Heart left ventricle (tissue), 16 donors: ENCODE measurements at regions of chr10 and their contacts with region 1.

Region 1: GRCh38 chr10:4849555-4850242 is 23.7 kb downstream of the AKR1E2 start:
- DNase-seq: peak; percentile 86 to 93 (median 89)
- ATAC-seq: peak; percentile 77 to 90 (median 88)
- H3K4me3 ChIP-seq: no peak overlapping the region
- H3K27ac ChIP-seq: peak overlapping the region in 8 of 12 donors; percentile 14 to 62 (median 38)
- H3K4me1 ChIP-seq: peaks cover 0 to 38% (median 20%) of the 10 kb centered on the region in 12 donors
- H3K27me3 ChIP-seq: no peaks in the 10 kb centered on the region
- CTCF ChIP-seq: peak in 11 of 12 donors; percentile 96 to 100 (median 99)
- POLR2A ChIP-seq: no peak

Region 2: DNA sequence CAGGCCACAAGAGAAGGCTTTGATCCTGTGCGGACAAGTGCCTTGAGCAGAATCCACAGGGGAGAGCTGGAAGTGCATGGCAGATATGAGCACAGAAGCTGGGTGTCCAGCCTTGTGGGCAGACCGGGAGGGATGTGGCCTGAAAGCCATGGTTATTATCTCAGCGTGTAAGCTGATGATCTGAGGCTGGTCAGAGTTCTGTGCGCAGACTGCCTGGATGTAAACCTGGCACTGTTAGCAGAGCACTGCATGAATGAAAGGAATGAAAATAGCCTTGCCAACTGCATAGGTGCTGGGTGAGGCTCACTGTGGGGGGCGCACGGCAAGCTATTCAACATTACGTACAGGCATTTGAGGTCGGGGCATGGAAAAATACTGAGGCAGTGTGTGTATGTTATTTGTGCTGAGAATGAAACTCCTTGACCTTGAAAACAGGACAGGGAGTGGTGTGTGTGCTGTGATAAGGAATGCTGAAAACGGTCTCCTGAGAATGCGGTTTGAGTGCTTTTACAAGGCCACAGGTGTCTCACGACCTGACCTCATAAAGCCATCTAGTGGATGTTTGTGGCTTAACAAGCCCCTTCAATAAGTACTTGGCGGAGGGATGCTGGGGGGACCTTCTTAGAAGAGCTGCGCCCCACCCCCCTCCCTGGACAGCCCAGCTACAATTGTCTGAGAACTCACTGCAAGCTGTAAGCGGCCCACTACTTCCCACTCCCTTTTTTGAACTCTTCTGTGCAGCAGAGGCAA is 132.2 kb after region 1 on chr10:
- intact Hi-C with region 1: loop called in 7 of 10 experiments (anchors 1 to 10 kb)
- DNase-seq: peak in 2 of 5 donors; percentile 17 to 31
- ATAC-seq: peak in 3 of 4 donors; percentile 52 to 68 (median 53)
- H3K4me3 ChIP-seq: no peak overlapping the region
- H3K27ac ChIP-seq: peak overlapping the region in 5 of 12 donors; percentile 7 to 52 (median 50)
- H3K4me1 ChIP-seq: peaks cover 0 to 18% (median 6%) of the 10 kb centered on the region in 12 donors
- H3K27me3 ChIP-seq: no peaks in the 10 kb centered on the region
- CTCF ChIP-seq: peak; percentile 21 to 58 (median 51)
- POLR2A ChIP-seq: no peak

Region 3: GRCh38 chr10:5105626-5106025 is 255.9 kb after region 1 on chr10:
- intact Hi-C with region 1: no loop called
- DNase-seq: no peak
- ATAC-seq: no peak
- H3K4me3 ChIP-seq: no peak overlapping the region
- H3K27ac ChIP-seq: no peak overlapping the region
- H3K4me1 ChIP-seq: no peaks in the 10 kb centered on the region
- H3K27me3 ChIP-seq: no peaks in the 10 kb centered on the region
- CTCF ChIP-seq: no peak
- POLR2A ChIP-seq: no peak

Region 4: DNA sequence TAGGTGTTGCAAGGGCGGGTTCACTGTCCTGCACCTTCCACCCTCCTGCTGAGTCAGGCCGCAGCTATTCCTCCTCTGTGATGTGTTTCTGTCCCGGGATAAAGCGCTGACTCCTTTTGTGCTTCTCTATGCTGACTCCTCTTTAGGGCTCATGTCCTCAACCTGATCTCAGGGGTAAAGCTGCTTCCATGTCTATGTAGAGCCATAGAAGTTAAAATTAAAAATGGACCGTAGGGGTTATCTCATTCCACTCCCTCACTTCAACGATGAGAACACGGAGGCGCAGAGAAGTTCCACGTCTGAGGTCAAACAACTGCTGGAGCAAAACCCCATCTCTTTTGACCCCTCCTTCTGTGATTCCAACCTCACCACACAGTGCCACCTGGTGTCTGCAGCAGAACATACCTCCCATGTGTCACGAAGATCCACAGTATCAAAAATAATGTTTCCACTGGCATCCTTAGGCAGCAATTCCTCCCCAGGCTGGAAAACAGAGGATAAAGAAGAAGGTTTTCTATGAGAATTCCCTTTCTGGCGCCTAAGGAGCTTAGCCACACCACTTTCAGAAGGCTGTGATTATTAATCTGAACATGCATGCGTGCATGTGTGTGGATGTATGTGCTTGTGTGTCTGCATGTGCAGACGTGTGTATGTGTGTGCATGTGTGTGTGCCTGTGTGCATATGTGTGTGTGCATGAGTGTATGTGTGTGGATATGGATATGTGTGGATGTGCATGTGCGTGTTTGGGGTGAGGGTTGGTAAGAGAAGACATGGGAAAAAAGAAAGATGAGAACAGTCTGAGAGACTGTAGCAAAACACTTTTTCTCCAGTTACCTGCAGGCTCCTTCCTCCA is 433.8 kb after region 1 on chr10:
- intact Hi-C with region 1: loop called in 9 of 10 experiments (anchors 1 to 5 kb)
- DNase-seq: peak in 4 of 5 donors; percentile 44 to 63 (median 58)
- ATAC-seq: peak in 3 of 4 donors; percentile 88 to 95 (median 94)
- H3K4me3 ChIP-seq: no peak overlapping the region
- H3K27ac ChIP-seq: peak overlapping the region in 1 of 12 donors; percentile 63
- H3K4me1 ChIP-seq: peaks cover 0 to 22% (median 0%) of the 10 kb centered on the region in 12 donors
- H3K27me3 ChIP-seq: peaks cover 0 to 4% (median 0%) of the 10 kb centered on the region in 9 donors
- CTCF ChIP-seq: peak; percentile 54 to 76 (median 62)
- POLR2A ChIP-seq: no peak

Region 5: GRCh38 chr10:5434017-5434753 is 584.5 kb after region 1 on chr10:
- intact Hi-C with region 1: loop called (anchors 1 to 10 kb)
- DNase-seq: no peak
- ATAC-seq: peak in 3 of 4 donors; percentile 61 to 66 (median 64)
- H3K4me3 ChIP-seq: no peak overlapping the region
- H3K27ac ChIP-seq: no peak overlapping the region
- H3K4me1 ChIP-seq: no peaks in the 10 kb centered on the region
- H3K27me3 ChIP-seq: no peaks in the 10 kb centered on the region
- CTCF ChIP-seq: peak; percentile 48 to 79 (median 68)
- POLR2A ChIP-seq: no peak